IMR-90 (cell line): ENCODE measurements at regions of chr14 and their contacts with region 1.

Region 1: DNA sequence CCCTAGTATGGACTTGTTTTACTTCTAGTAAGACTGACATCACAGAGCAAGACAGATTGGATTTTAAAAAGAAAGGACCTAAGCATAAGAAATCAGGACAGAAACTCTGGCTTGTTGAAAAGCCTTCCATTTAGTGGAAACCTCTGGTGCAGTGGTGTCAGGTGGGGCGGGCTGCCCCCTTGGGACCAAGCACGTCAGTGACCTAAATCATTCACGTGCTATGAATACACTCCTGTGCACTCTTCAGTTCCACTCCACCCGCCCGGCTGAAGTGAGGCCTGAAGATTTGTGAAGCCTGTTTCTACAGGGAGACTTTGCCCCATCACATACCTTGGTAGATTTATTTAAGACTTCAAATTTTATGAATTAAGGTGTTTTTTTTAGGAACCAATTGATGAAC is 58.2 kb upstream of the STRN3 start:
- DNase-seq: no peak
- ATAC-seq: no peak
- H3K4me3 ChIP-seq: no peak overlapping the region
- H3K27ac ChIP-seq: no peak overlapping the region
- H3K4me1 ChIP-seq: no peaks in the 10 kb centered on the region
- H3K27me3 ChIP-seq: no peaks in the 10 kb centered on the region
- CTCF ChIP-seq: no peak
- POLR2A ChIP-seq: no peak
- RAD21 ChIP-seq: no peak

Region 2: DNA sequence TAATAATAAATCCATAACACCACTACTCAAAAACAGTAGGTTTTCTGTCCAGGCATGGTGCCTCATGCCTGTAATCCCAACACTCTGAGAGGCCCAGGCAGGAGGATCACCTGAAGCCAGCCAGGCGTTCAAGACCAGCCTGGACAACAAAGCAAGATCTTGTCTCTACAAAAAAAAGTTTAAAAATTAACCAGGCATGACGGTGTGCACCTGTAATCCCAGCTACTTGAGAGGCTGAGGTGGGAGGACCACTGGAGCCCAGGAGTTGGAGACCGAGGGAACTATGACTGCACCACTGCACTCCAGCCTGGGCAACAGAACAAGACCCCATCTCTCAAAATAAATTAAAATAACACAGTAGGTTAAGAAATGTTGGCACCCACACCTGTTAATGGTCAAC is 103.4 kb before region 1 on chr14:
- CTCF ChIA-PET with region 1: no interaction called
- POLR2A ChIA-PET with region 1: no interaction called
- dilution Hi-C with region 1: no loop called
- in situ Hi-C with region 1: loop called (anchors 5 kb)
- intact Hi-C with region 1: loop called (anchors 1 kb)
- DNase-seq: no peak
- ATAC-seq: no peak
- H3K4me3 ChIP-seq: no peak overlapping the region
- H3K27ac ChIP-seq: peak overlapping the region; percentile 7; the same call in 1 of the 2 replicates
- H3K4me1 ChIP-seq: no peaks in the 10 kb centered on the region
- H3K27me3 ChIP-seq: no peaks in the 10 kb centered on the region
- CTCF ChIP-seq: no peak
- POLR2A ChIP-seq: no peak
- RAD21 ChIP-seq: no peak